Naive thymus-derived CD4-positive, alpha-beta T cell (primary cell): ENCODE measurements at regions of chr3 and their contacts with region 1.

Region 1: GRCh38 chr3:53709860-53710674 is 136.2 kb downstream of the CHDH start:
- DNase-seq: peak; percentile 15 to 62 (median 46)
- ATAC-seq: peak; percentile 85
- H3K4me3 ChIP-seq: no peak overlapping the region
- H3K4me3 Mint-ChIP-seq: no peak overlapping the region
- H3K27ac ChIP-seq: no peak overlapping the region
- H3K27ac Mint-ChIP-seq: no peak overlapping the region
- H3K4me1 ChIP-seq: no peaks in the 10 kb centered on the region
- H3K4me1 Mint-ChIP-seq: peaks cover 0 to 22% (median 0%) of the 10 kb centered on the region in 7 donors
- H3K27me3 ChIP-seq: no peaks in the 10 kb centered on the region
- H3K27me3 Mint-ChIP-seq: peaks cover 0 to 7% (median 5%) of the 10 kb centered on the region in 5 donors

Region 2: GRCh38 chr3:53219895-53220483 is 490.1 kb before region 1 on chr3:
- CTCF ChIA-PET with region 1: interaction called, 4 read pairs
- POLR2A ChIA-PET with region 1: no interaction called
- intact Hi-C with region 1: loop called in 1 of 2 experiments (anchors 1 kb)
- DNase-seq: peak; percentile 39 to 83 (median 66)
- ATAC-seq: peak; percentile 91
- H3K4me3 ChIP-seq: no peak overlapping the region
- H3K4me3 Mint-ChIP-seq: no peak overlapping the region
- H3K27ac ChIP-seq: no peak overlapping the region
- H3K27ac Mint-ChIP-seq: peak overlapping the region in 3 of 9 donors; percentile 7 to 19 (median 13)
- H3K4me1 ChIP-seq: no peaks in the 10 kb centered on the region
- H3K4me1 Mint-ChIP-seq: peaks cover 0 to 5% (median 3%) of the 10 kb centered on the region in 7 donors
- H3K27me3 ChIP-seq: no peaks in the 10 kb centered on the region
- H3K27me3 Mint-ChIP-seq: peaks cover 0 to 5% (median 0%) of the 10 kb centered on the region in 5 donors

Region 3: DNA sequence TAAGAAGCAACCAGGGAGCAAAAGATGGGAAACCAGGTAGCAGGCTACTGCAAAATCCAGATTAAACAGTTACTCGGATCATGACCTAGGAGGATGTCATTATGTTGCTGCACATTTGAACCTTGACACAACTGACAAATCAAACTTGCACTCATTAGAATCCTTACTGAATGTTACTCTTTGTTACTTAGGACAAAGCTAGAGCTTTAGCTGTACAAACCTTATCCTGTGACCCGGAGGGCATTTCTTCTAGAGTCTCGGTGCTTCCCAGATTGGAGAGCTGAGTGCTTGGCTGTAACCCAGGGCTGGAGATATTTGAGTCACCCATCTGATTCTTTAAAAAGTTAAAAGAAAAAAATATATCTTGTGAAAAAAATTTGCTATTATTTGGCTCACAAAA is 406.1 kb before region 1 on chr3:
- CTCF ChIA-PET with region 1: interaction called, 5 read pairs
- POLR2A ChIA-PET with region 1: no interaction called
- intact Hi-C with region 1: loop called in 1 of 2 experiments (anchors 1 kb)
- DNase-seq: no peak
- ATAC-seq: no peak
- H3K4me3 ChIP-seq: no peak overlapping the region
- H3K4me3 Mint-ChIP-seq: no peak overlapping the region
- H3K27ac ChIP-seq: no peak overlapping the region
- H3K27ac Mint-ChIP-seq: peak overlapping the region in 3 of 9 donors; percentile 16 to 74 (median 27)
- H3K4me1 ChIP-seq: no peaks in the 10 kb centered on the region
- H3K4me1 Mint-ChIP-seq: peaks cover 0 to 5% (median 0%) of the 10 kb centered on the region in 7 donors
- H3K27me3 ChIP-seq: no peaks in the 10 kb centered on the region
- H3K27me3 Mint-ChIP-seq: no peaks in the 10 kb centered on the region

Region 4: DNA sequence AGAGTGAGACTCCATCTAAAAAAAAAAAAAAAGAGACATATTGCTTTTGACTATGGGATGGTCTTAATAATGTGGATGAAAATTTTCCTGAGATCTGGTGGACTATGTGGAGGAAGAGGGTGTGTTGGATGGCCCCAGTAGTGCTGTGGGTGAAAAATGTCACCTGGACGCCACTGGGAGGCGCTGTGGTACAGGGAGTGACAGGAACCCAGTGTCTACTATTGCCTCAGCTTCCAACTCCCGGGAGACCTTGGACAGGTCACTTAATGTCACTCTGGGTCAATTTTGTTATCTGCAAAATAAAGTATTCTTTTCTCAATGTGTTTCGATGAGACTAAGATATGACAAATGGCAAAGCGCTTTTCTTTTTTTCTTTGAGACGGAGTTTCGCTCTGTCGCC is 335.0 kb before region 1 on chr3:
- CTCF ChIA-PET with region 1: no interaction called
- POLR2A ChIA-PET with region 1: no interaction called
- intact Hi-C with region 1: loop called in 1 of 2 experiments (anchors 1 kb)
- DNase-seq: peak in 6 of 9 donors; percentile 3 to 66 (median 13)
- ATAC-seq: peak; percentile 76
- H3K4me3 ChIP-seq: no peak overlapping the region
- H3K4me3 Mint-ChIP-seq: no peak overlapping the region
- H3K27ac ChIP-seq: no peak overlapping the region
- H3K27ac Mint-ChIP-seq: no peak overlapping the region
- H3K4me1 ChIP-seq: no peaks in the 10 kb centered on the region
- H3K4me1 Mint-ChIP-seq: no peaks in the 10 kb centered on the region
- H3K27me3 ChIP-seq: no peaks in the 10 kb centered on the region
- H3K27me3 Mint-ChIP-seq: peaks cover 14 to 49% (median 33%) of the 10 kb centered on the region in 5 donors

Region 5: GRCh38 chr3:53668872-53669271 is 41.2 kb before region 1 on chr3:
- CTCF ChIA-PET with region 1: no interaction called
- POLR2A ChIA-PET with region 1: no interaction called
- intact Hi-C with region 1: loop called in 1 of 2 experiments (anchors 5 kb)
- DNase-seq: no peak
- ATAC-seq: no peak
- H3K4me3 ChIP-seq: no peak overlapping the region
- H3K4me3 Mint-ChIP-seq: no peak overlapping the region
- H3K27ac ChIP-seq: no peak overlapping the region
- H3K27ac Mint-ChIP-seq: no peak overlapping the region
- H3K4me1 ChIP-seq: no peaks in the 10 kb centered on the region
- H3K4me1 Mint-ChIP-seq: no peaks in the 10 kb centered on the region
- H3K27me3 ChIP-seq: no peaks in the 10 kb centered on the region
- H3K27me3 Mint-ChIP-seq: peaks cover 12 to 50% (median 33%) of the 10 kb centered on the region in 5 donors

Region 6: GRCh38 chr3:53804821-53805788 is 95.0 kb after region 1 on chr3:
- CTCF ChIA-PET with region 1: no interaction called
- POLR2A ChIA-PET with region 1: no interaction called
- intact Hi-C with region 1: loop called in 1 of 2 experiments (anchors 5 kb)
- DNase-seq: no peak
- ATAC-seq: no peak
- H3K4me3 ChIP-seq: no peak overlapping the region
- H3K4me3 Mint-ChIP-seq: no peak overlapping the region
- H3K27ac ChIP-seq: no peak overlapping the region
- H3K27ac Mint-ChIP-seq: no peak overlapping the region
- H3K4me1 ChIP-seq: no peaks in the 10 kb centered on the region
- H3K4me1 Mint-ChIP-seq: peaks cover 0 to 1% (median 0%) of the 10 kb centered on the region in 7 donors
- H3K27me3 ChIP-seq: no peaks in the 10 kb centered on the region
- H3K27me3 Mint-ChIP-seq: peaks cover 0 to 13% (median 0%) of the 10 kb centered on the region in 5 donors

Region 7: GRCh38 chr3:54213910-54214309 is 503.8 kb after region 1 on chr3:
- CTCF ChIA-PET with region 1: no interaction called
- POLR2A ChIA-PET with region 1: no interaction called
- intact Hi-C with region 1: no loop called
- DNase-seq: no peak
- ATAC-seq: no peak
- H3K4me3 ChIP-seq: no peak overlapping the region
- H3K4me3 Mint-ChIP-seq: no peak overlapping the region
- H3K27ac ChIP-seq: no peak overlapping the region
- H3K27ac Mint-ChIP-seq: no peak overlapping the region
- H3K4me1 ChIP-seq: no peaks in the 10 kb centered on the region
- H3K4me1 Mint-ChIP-seq: no peaks in the 10 kb centered on the region
- H3K27me3 ChIP-seq: no peaks in the 10 kb centered on the region
- H3K27me3 Mint-ChIP-seq: no peaks in the 10 kb centered on the region

Region 8: DNA sequence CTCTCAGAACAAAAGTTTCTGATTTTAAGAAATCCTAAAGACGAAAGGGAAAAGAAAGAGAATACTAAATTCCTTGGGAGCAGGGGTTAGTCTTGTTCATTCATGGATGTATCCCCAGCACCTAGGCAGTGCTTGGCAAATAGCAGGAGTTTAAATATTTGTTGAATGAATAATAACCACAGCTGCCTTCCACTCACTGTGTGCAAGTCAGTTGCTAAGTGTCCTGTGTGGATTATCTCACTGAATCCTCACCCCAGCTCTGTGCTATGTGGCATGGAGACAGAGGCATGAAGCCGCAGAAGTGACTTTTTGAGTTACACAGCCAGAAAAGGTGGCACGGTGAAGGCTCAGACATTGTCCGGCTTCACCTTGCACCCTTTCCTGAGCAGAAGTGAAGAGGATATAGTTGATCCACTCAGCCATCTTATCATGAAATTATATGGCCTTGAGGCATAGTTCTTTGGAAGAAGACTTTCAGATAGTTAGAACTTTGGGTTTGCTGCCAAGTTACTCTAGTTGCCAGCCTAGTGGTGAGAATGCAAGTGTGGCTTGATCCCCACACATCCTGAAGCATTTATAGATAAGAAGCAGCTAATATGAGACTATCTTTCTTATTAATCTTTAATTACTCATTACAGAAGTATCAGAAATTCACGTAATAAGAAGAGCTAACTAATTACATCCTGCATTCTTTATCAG is 862.3 kb after region 1 on chr3:
- CTCF ChIA-PET with region 1: no interaction called
- POLR2A ChIA-PET with region 1: no interaction called
- intact Hi-C with region 1: no loop called
- DNase-seq: no peak
- ATAC-seq: no peak
- H3K4me3 ChIP-seq: no peak overlapping the region
- H3K4me3 Mint-ChIP-seq: no peak overlapping the region
- H3K27ac ChIP-seq: no peak overlapping the region
- H3K27ac Mint-ChIP-seq: no peak overlapping the region
- H3K4me1 ChIP-seq: no peaks in the 10 kb centered on the region
- H3K4me1 Mint-ChIP-seq: no peaks in the 10 kb centered on the region
- H3K27me3 ChIP-seq: no peaks in the 10 kb centered on the region
- H3K27me3 Mint-ChIP-seq: peaks cover 0 to 6% (median 0%) of the 10 kb centered on the region in 5 donors